ENCODE measurements at regions of chr16 and their contacts with region 1.

Region 1: DNA sequence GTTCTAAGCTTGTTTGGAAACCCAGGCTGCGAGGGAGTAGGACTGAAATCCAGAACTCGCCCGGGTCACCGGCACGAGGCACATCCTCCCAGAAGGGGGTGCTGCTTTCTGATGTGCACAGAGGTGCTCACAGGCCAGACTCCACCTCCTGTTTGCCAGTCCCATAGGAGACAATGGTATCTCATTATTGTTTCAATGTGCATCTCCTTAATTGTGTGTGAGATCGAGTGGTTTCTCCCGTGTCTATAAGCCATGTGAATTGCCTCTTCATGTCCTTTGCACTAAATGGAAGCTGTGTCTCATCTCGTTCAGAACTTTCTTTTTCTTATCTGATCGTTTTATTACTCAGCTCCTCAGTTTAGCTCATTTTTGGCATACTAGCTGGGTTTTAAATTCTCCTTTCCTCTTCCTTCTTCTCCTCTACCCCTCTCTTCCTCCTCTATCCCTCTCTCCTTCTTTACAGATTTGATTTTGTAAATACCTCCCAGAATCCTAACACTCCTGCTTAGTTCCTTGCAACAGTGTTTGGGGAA is 32.1 kb upstream of the PRKCB start:
- DNase-seq: peak; percentile 73
- H3K4me3 ChIP-seq: no peak overlapping the region
- H3K27ac ChIP-seq: no peak overlapping the region
- H3K4me1 ChIP-seq: no peaks in the 10 kb centered on the region
- H3K27me3 ChIP-seq: no peaks in the 10 kb centered on the region
- CTCF ChIP-seq: peak; percentile 47

Region 2: GRCh38 chr16:23640931-23641765 is 162.5 kb before region 1 on chr16 and contains the starts of genes DCTN5 and PALB2:
- intact Hi-C with region 1: no loop called
- DNase-seq: peak; percentile 94
- H3K4me3 ChIP-seq: peak within 1 kb of the TSS; percentile 99
- H3K27ac ChIP-seq: peak within 1 kb of the TSS; percentile 72
- H3K4me1 ChIP-seq: peaks cover 3% of the 10 kb centered on the region
- H3K27me3 ChIP-seq: no peaks in the 10 kb centered on the region
- CTCF ChIP-seq: no peak
- total RNA-seq, gene DCTN5: 61.5 to 62.1 TPM
- total RNA-seq, gene PALB2: 8.2 to 13.3 TPM

Region 3: GRCh38 chr16:24010440-24011089 is 206.9 kb after region 1 on chr16:
- intact Hi-C with region 1: loop called (anchors 2 kb)
- DNase-seq: peak; percentile 83
- H3K4me3 ChIP-seq: no peak overlapping the region
- H3K27ac ChIP-seq: no peak overlapping the region
- H3K4me1 ChIP-seq: peaks cover 9% of the 10 kb centered on the region
- H3K27me3 ChIP-seq: no peaks in the 10 kb centered on the region
- CTCF ChIP-seq: peak; percentile 80

Region 4: DNA sequence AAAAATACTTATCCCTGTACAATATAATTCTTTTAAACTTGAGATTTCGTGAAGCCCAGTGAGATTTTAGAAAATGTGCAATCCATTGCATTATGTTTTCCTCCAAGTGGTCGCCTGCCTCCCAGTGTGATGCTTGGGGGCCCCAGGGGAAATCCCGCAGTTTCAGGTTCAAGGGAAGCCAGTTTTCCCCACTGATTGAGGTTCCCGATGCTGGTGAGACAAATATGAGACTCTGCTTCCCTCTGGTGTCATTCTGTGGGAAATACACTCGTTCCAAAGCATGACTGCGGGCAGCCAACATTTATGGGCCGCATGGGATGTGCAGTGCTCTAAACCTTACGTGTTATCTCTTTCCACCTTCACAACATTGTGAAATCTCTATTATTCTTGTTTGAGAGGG is 233.0 kb after region 1 on chr16:
- intact Hi-C with region 1: loop called (anchors 5 kb)
- DNase-seq: peak; percentile 48
- H3K4me3 ChIP-seq: no peak overlapping the region
- H3K27ac ChIP-seq: no peak overlapping the region
- H3K4me1 ChIP-seq: no peaks in the 10 kb centered on the region
- H3K27me3 ChIP-seq: no peaks in the 10 kb centered on the region
- CTCF ChIP-seq: peak; percentile 64